HCT116 (cell line): ENCODE measurements at regions of chr6 and their contacts with region 1.

Region 1: GRCh38 chr6:168616816-168617765 is 176.1 kb downstream of the SMOC2 start:
- DNase-seq: no peak
- ATAC-seq: peak; percentile 66
- H3K4me3 ChIP-seq: no peak overlapping the region
- H3K27ac ChIP-seq: no peak overlapping the region
- H3K4me1 ChIP-seq: no peaks in the 10 kb centered on the region; a peak in 1 of 4 replicates
- H3K27me3 ChIP-seq: no peaks in the 10 kb centered on the region
- CTCF ChIP-seq: peak; percentile 28 to 49 (median 33); a peak in 4 of 6 replicates
- POLR2A ChIP-seq: no peak
- RAD21 ChIP-seq: peak; percentile 73

Region 2: DNA sequence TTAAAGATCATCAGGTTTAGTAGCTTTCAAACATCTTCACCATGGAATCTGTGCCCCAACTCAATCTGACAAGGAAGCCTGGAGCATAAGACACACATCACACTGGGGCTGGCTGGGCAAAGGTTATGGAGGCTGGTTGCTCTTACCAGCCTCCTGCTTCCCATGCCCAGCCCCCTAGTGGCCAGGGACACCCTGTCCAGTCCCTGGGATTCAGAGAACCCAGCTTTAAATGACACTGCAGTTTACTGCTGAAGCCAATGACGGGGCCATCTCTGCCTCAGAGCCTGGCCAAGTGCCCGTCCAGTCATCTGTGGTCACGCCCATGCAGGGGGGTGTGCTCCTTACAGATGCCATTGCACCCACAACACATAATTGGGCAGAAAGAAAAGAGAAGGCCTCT is 96.7 kb after region 1 on chr6:
- CTCF ChIA-PET with region 1: interaction called, 4 read pairs
- POLR2A ChIA-PET with region 1: no interaction called
- RAD21 ChIA-PET with region 1: no interaction called
- intact Hi-C with region 1: loop called (anchors 5 kb)
- DNase-seq: peak; percentile 49
- ATAC-seq: peak; percentile 93
- H3K4me3 ChIP-seq: no peak overlapping the region
- H3K27ac ChIP-seq: no peak overlapping the region
- H3K4me1 ChIP-seq: peaks cover 0 to 6% of the 10 kb centered on the region in 2 experiments; a peak in 1 of 4 replicates
- H3K27me3 ChIP-seq: no peaks in the 10 kb centered on the region
- CTCF ChIP-seq: peak; percentile 31 to 67 (median 66); a peak in 4 of 6 replicates
- POLR2A ChIP-seq: no peak
- RAD21 ChIP-seq: peak; percentile 60

Region 3: GRCh38 chr6:169253337-169254238 is 636.5 kb after region 1 on chr6 and contains the start of gene THBS2:
- CTCF ChIA-PET with region 1: no interaction called
- POLR2A ChIA-PET with region 1: no interaction called
- RAD21 ChIA-PET with region 1: no interaction called
- intact Hi-C with region 1: no loop called
- DNase-seq: no peak
- ATAC-seq: no peak
- H3K4me3 ChIP-seq: no peak within 1 kb of the TSS
- H3K27ac ChIP-seq: no peak within 1 kb of the TSS
- H3K4me1 ChIP-seq: peaks cover 0 to 9% of the 10 kb centered on the region in 2 experiments; a peak in 3 of 4 replicates
- H3K27me3 ChIP-seq: no peaks in the 10 kb centered on the region
- CTCF ChIP-seq: no peak
- POLR2A ChIP-seq: no peak
- RAD21 ChIP-seq: no peak
- total RNA-seq, gene THBS2: 0.39 TPM